A549 (cell line): ENCODE measurements at regions of chr4 and their contacts with region 1.

Region 1: DNA sequence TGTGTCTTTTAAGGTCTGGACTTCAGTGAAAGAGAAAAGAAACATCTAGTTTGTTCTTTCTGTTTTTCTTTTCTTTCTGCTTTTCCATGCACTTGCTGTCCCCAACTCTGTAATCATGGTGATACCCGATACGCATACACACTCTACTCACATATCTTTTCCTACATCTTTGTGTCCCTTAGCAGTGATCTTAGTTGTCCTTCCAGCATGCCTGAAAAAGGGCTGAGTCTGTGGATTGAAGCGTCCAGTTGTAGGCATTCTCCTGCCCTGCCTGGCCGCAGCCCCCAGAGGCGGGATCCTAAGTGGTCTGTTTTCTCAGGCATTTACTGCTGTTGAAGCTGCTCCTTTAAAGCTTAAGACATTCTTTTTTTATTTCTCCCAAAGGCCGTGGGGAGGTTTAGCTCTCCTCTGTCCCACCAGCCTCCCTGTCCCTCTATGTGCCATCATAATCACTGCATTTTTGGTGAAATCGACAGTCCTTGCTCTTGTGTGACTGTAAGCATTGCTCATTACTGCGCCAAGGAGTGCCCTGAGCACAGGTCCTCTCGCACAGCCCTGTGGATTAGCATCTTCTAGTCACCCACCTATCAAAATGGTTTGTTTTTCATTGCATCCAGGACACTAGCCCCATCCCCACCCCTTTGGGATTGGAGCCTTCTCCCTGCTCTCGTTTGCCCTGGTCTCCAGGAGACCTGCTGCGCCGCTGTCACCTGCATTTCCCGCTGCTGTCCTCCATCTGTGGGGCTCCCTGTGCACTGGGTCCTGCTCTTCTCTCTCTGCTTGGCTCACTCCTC is 4.4 kb downstream of the RGS12 start:
- DNase-seq: no peak
- ATAC-seq: no peak
- H3K4me3 ChIP-seq: no peak overlapping the region
- H3K27ac ChIP-seq: no peak overlapping the region
- H3K4me1 ChIP-seq: peaks cover 7% of the 10 kb centered on the region; the same call in 1 of the 3 replicates
- CTCF ChIP-seq: no peak
- EP300 ChIP-seq: no peak
- POLR2A ChIP-seq: no peak
- RAD21 ChIP-seq: no peak

Region 2: GRCh38 chr4:2725380-2725779 is 571.9 kb before region 1 on chr4:
- CTCF ChIA-PET with region 1: no interaction called
- POLR2A ChIA-PET with region 1: interaction called, 11 read pairs
- DNase-seq: no peak
- ATAC-seq: no peak
- H3K4me3 ChIP-seq: no peak overlapping the region
- H3K27ac ChIP-seq: no peak overlapping the region
- H3K4me1 ChIP-seq: no peaks in the 10 kb centered on the region
- CTCF ChIP-seq: no peak
- EP300 ChIP-seq: no peak
- POLR2A ChIP-seq: no peak
- RAD21 ChIP-seq: no peak